Naive thymus-derived CD4-positive, alpha-beta T cell (primary cell): ENCODE measurements at regions of chr1 and their contacts with region 1.

Region 1: DNA sequence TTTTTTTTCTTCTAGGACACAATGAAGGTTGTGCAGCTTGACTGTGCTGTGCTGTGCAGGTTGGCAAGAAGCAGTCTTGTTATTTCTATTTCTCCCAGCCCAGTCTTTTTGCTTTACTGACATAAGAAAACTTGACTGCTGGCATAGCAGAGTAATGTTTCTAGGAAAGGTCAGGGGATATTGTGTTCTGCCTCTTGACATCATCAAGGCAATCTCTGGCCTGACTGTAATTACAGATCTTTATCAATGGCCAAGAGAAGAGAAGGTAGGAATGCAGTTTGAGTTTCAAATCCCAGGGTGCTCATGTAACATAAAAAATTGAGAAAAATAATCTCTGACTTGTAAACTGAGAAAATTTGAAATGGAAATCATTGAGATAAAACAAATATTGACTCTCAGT is 226.3 kb upstream of the ADGRL4 start:
- DNase-seq: no peak
- ATAC-seq: no peak
- H3K4me3 ChIP-seq: no peak overlapping the region
- H3K4me3 Mint-ChIP-seq: no peak overlapping the region
- H3K27ac ChIP-seq: no peak overlapping the region
- H3K27ac Mint-ChIP-seq: no peak overlapping the region
- H3K4me1 ChIP-seq: no peaks in the 10 kb centered on the region
- H3K4me1 Mint-ChIP-seq: no peaks in the 10 kb centered on the region
- H3K27me3 ChIP-seq: no peaks in the 10 kb centered on the region
- H3K27me3 Mint-ChIP-seq: no peaks in the 10 kb centered on the region

Region 2: DNA sequence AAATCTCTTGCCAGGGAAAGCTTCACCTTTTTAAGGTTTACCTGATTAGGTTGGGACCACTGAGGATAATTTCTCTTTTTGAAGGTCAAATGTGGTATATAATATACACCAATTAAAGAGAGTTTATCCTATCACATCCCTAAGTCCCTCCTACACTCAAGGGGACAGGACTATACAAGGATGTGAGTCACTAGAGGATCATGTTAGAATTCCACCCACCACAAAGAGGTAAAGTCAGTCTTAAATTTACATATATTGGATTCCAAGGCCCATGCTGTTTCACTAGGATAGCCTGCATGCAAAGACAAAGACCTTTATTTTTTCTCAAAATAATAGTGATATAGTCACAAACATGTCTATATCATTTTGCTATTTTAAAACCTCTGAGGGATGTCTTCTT is 1022.7 kb before region 1 on chr1:
- CTCF ChIA-PET with region 1: no interaction called
- POLR2A ChIA-PET with region 1: no interaction called
- intact Hi-C with region 1: loop called in 1 of 2 experiments (anchors 5 kb)
- DNase-seq: no peak
- ATAC-seq: no peak
- H3K4me3 ChIP-seq: no peak overlapping the region
- H3K4me3 Mint-ChIP-seq: no peak overlapping the region
- H3K27ac ChIP-seq: no peak overlapping the region
- H3K27ac Mint-ChIP-seq: no peak overlapping the region
- H3K4me1 ChIP-seq: no peaks in the 10 kb centered on the region
- H3K4me1 Mint-ChIP-seq: no peaks in the 10 kb centered on the region
- H3K27me3 ChIP-seq: no peaks in the 10 kb centered on the region
- H3K27me3 Mint-ChIP-seq: peaks cover 0 to 31% (median 15%) of the 10 kb centered on the region in 5 donors